ENCODE measurements at regions of chr11 and their contacts with region 1.

Region 1: GRCh38 chr11:17978553-17979287 is 34.1 kb downstream of the SERGEF start:
- DNase-seq: no peak
- H3K4me3 ChIP-seq: no peak overlapping the region
- H3K27me3 ChIP-seq: no peaks in the 10 kb centered on the region
- CTCF ChIP-seq: peak; percentile 92

Region 2: DNA sequence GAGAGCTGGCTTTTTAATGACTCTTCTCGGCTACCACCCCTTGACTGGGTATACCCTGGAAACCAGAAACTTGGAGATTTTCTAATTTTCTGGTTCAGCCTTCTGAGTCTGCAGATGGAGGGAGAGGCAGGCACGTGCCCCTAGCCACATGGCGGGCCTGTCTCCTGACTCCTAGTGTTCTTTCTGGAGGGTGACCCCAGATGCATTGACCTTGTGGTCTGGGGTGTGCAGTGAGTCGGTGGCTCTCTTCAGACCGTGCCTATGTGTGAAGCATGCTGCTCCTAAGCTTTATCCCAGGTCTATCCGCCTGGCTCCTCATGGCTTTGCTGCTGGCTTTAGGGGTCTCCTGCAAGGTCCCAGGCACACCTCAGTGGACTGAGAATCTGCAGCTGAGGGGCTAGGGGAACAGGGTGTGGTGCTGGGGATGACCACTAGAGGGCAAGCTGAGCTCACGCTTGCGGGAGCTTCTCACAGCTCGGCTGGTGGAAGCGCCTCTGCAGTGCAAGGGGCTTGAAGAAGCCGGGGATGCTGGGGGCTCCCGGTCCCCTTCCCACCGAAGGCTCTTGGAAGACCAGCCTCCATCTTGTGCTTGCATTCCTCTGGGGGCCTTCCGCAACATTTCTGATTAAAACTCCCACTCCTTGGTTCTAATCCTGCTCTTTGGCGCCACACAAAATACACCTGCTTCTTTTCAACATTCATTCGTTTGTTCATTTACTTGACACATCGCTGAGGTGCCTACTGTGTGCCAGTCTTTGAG is 379.8 kb before region 1 on chr11:
- CTCF ChIA-PET with region 1: interaction called, 19 read pairs
- POLR2A ChIA-PET with region 1: no interaction called
- DNase-seq: no peak
- H3K4me3 ChIP-seq: no peak overlapping the region
- H3K27me3 ChIP-seq: no peaks in the 10 kb centered on the region
- CTCF ChIP-seq: peak; percentile 99

Region 3: GRCh38 chr11:17760102-17761029 is 218.4 kb before region 1 on chr11:
- CTCF ChIA-PET with region 1: interaction called, 181 read pairs
- POLR2A ChIA-PET with region 1: no interaction called
- DNase-seq: no peak
- H3K4me3 ChIP-seq: no peak overlapping the region
- H3K27me3 ChIP-seq: no peaks in the 10 kb centered on the region; the same call in 1 of the 2 replicates
- CTCF ChIP-seq: peak; percentile 74

Region 4: GRCh38 chr11:17960091-17960490 is 18.6 kb before region 1 on chr11:
- CTCF ChIA-PET with region 1: interaction called, 21 read pairs
- POLR2A ChIA-PET with region 1: no interaction called
- DNase-seq: no peak
- H3K4me3 ChIP-seq: no peak overlapping the region
- H3K27me3 ChIP-seq: no peaks in the 10 kb centered on the region
- CTCF ChIP-seq: no peak

Region 5: GRCh38 chr11:17991783-17992433 is 13.2 kb after region 1 on chr11:
- CTCF ChIA-PET with region 1: interaction called, 82 read pairs
- POLR2A ChIA-PET with region 1: no interaction called
- DNase-seq: no peak
- H3K4me3 ChIP-seq: no peak overlapping the region
- H3K27me3 ChIP-seq: no peaks in the 10 kb centered on the region
- CTCF ChIP-seq: peak; percentile 89